ENCODE measurements at regions of chr6 and their contacts with region 1.

Region 1: DNA sequence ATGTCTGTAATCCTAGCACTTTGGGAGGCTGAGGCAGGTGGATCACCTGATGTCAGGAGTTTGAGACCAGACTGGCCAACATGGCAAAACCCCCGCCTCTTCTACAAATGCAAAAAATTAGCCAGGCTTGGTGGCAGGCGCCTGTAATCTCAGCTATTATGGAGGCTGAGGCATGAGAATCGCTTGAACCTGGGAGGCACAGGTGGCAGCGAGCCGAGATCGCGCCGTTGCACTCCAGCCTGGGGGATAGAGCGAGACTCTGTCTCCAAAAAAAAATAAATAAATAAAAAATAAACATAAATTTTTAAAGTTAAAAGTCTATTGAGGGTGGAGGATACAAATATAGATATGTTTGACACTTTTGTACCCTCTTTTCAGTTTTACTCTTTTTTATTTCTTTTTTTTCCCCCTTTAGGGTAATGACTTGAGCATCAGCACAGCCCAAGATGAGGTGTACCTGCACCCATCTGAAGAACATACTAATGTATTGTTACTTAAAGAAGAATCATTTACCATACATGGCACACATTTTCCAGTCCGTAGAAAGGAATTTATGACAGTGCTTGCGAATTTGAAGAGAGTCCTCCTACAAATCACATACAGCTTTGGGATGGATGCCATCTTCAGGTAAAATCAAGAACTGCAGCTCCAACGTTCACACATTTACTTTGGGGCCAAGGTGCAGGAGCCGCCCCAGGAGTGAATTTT is 368.9 kb downstream of the LAMA2 start:
- DNase-seq: peak in 1 of 2 donors; percentile 58
- ATAC-seq: no peak
- H3K4me3 ChIP-seq: no peak overlapping the region
- H3K27ac ChIP-seq: no peak overlapping the region
- H3K4me1 ChIP-seq: no peaks in the 10 kb centered on the region
- H3K27me3 ChIP-seq: no peaks in the 10 kb centered on the region

Region 2: GRCh38 chr6:128725271-128726233 is 526.3 kb before region 1 on chr6:
- intact Hi-C with region 1: loop called in 1 of 2 experiments (anchors 10 kb)
- DNase-seq: no peak
- ATAC-seq: no peak
- H3K4me3 ChIP-seq: no peak overlapping the region
- H3K27ac ChIP-seq: no peak overlapping the region
- H3K4me1 ChIP-seq: no peaks in the 10 kb centered on the region
- H3K27me3 ChIP-seq: no peaks in the 10 kb centered on the region

Region 3: DNA sequence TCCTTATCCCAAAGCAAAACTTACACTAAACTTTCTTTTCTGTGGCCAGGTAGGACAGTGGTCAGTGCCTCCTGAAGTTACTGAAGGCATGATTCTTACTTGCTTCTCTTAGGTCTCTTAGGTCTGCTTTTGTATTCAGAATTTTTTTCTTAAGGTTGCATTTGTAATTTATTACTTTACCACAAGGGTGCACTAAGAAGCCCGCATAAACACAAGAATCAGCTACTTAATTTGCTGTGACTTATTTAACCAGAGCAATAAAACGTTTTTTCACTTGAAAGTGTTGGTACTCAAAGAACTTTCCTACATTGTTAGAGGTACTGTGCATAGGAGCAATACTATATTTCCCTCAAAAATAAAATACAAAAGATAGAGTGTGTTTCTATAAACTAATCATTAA is 444.2 kb before region 1 on chr6:
- intact Hi-C with region 1: loop called in 1 of 2 experiments (anchors 10 kb)
- DNase-seq: no peak
- ATAC-seq: no peak
- H3K4me3 ChIP-seq: no peak overlapping the region
- H3K27ac ChIP-seq: no peak overlapping the region
- H3K4me1 ChIP-seq: no peaks in the 10 kb centered on the region
- H3K27me3 ChIP-seq: no peaks in the 10 kb centered on the region

Region 4: DNA sequence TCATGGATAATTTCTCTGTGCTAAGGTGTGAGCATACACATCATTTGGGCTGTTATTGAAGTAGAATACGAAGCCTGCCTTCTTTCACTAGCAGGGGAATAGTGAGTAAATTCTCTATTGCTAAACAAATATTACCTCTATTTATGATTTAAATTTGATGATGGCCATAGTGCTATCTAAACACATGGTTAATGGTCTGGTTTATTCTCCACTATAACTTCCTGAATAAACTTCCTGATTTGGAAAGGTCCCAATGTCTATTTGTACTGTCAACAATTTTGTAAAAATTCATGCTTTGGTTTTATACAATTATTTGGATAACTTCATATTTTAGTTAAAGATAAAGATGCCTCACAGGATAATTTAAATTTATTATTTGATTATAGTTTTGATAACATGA is 57.3 kb after region 1 on chr6:
- intact Hi-C with region 1: no loop called
- DNase-seq: no peak
- ATAC-seq: no peak
- H3K4me3 ChIP-seq: no peak overlapping the region
- H3K27ac ChIP-seq: no peak overlapping the region
- H3K4me1 ChIP-seq: no peaks in the 10 kb centered on the region
- H3K27me3 ChIP-seq: no peaks in the 10 kb centered on the region